Body of pancreas (tissue), 4 donors: ENCODE measurements at regions of chr10 and their contacts with region 1.

Region 1: GRCh38 chr10:71899665-71900412 is 48.8 kb upstream of the PSAP start:
- DNase-seq: no peak
- ATAC-seq: no peak
- H3K4me3 ChIP-seq: no peak overlapping the region
- H3K27ac ChIP-seq: no peak overlapping the region
- H3K4me1 ChIP-seq: no peaks in the 10 kb centered on the region
- H3K27me3 ChIP-seq: no peaks in the 10 kb centered on the region
- CTCF ChIP-seq: no peak
- POLR2A ChIP-seq: no peak

Region 2: DNA sequence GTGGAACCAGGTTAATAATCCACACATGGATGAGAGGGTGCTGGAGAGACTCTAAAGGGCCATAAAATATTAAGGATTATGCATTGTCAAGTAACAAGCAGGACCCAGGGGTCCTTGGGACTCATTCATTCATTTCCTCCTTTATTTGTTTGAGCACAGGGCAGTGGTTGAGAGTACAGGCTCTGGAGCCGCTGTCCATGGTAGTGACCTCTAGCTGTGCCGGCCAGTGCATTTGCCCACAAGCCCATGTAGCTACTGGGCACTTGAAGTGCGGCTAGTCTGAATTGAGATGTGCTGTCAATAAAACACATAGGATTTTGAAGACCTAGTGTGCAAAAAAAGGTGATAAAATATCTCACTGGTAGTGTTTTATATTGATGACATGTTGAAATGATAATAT is 317.8 kb before region 1 on chr10:
- intact Hi-C with region 1: no loop called
- DNase-seq: no peak
- ATAC-seq: no peak
- H3K4me3 ChIP-seq: no peak overlapping the region
- H3K27ac ChIP-seq: no peak overlapping the region
- H3K4me1 ChIP-seq: no peaks in the 10 kb centered on the region
- H3K27me3 ChIP-seq: no peaks in the 10 kb centered on the region
- CTCF ChIP-seq: no peak
- POLR2A ChIP-seq: no peak

Region 3: GRCh38 chr10:71753091-71753959 is 146.5 kb before region 1 on chr10:
- intact Hi-C with region 1: no loop called
- DNase-seq: peak in 1 of 4 donors; percentile 83
- ATAC-seq: no peak
- H3K4me3 ChIP-seq: no peak overlapping the region
- H3K27ac ChIP-seq: peak overlapping the region in 1 of 4 donors; percentile 61
- H3K4me1 ChIP-seq: peaks cover 9% of the 10 kb centered on the region
- H3K27me3 ChIP-seq: no peaks in the 10 kb centered on the region
- CTCF ChIP-seq: no peak
- POLR2A ChIP-seq: peak in 1 of 3 donors; percentile 43

Region 4: DNA sequence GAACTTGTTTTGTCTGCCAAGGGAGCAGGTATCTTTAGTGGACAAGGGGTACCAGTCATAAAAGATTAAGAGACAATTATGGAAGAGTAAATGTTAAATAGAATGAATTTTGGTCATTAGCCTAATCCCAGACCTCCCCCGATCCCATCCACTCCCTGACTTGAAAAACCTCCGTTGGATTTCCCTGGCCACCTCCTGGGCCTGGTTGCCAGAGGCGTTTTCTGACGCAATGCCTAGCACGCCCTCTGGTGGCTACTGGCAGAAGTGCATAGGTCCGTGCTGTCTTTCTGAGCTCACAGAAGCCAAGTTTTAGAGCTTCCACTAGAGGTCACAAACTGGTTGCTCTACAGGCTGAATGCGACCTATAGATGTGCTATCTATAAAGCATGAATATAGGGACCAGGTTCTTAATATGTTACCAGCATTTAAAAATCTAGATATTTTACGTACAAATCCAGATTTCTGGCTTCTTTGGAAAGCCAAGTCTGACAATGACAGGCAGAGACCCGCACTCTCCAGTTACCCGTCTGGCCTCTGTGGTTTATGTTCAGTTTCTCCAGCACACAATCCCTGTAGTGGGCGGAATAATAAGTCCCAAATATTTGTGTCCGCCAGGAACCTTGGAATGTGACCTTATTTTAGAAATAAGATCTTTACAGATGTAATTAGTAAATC is 148.7 kb after region 1 on chr10:
- intact Hi-C with region 1: loop called (anchors 5 kb)
- DNase-seq: peak; percentile 94 to 97 (median 94)
- ATAC-seq: peak; percentile 92
- H3K4me3 ChIP-seq: no peak overlapping the region
- H3K27ac ChIP-seq: no peak overlapping the region
- H3K4me1 ChIP-seq: no peaks in the 10 kb centered on the region
- H3K27me3 ChIP-seq: no peaks in the 10 kb centered on the region
- CTCF ChIP-seq: peak; percentile 97 to 99 (median 99)
- POLR2A ChIP-seq: no peak

Region 5: DNA sequence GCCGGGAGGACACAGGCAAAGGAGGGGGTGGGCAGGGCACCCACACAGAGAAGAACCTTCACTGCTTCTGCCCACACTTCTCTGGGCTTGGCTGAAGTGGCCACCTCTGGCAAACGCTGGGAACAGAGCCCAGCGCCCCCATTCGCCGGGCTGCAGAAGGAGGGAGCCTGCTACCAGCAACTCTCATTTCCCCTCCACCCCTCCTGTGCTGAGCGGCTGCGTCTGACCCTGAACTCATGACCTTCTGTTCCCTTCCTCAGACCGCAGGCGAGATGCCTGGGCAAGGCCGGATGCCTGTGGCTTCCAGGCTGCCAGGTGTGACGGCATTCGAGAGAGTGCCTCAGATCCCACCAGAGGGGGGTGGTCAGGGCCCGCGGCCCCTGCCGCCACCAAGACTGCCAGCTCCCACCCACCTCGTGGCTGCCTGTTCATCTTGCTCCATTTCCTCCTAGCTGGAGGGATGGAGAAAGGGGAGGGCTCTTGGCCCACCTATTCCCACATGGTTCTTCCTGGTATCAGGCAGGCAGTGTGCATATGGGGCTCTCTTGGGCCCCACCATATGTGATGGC is 435.1 kb after region 1 on chr10:
- intact Hi-C with region 1: loop called (anchors 5 kb)
- DNase-seq: peak; percentile 88 to 96 (median 92)
- ATAC-seq: peak; percentile 38
- H3K4me3 ChIP-seq: no peak overlapping the region
- H3K27ac ChIP-seq: peak overlapping the region; percentile 87 to 99 (median 96)
- H3K4me1 ChIP-seq: peaks cover 77% of the 10 kb centered on the region
- H3K27me3 ChIP-seq: no peaks in the 10 kb centered on the region
- CTCF ChIP-seq: no peak
- POLR2A ChIP-seq: peak; percentile 18 to 55 (median 27)